HepG2 (cell line): ENCODE measurements at regions of chr7 and their contacts with region 1.

Region 1: GRCh38 chr7:78134256-78134655 is 335.7 kb downstream of the PHTF2 start:
- DNase-seq: peak; percentile 3
- ATAC-seq: peak; percentile 73
- H3K4me3 ChIP-seq: no peak overlapping the region
- H3K27ac ChIP-seq: no peak overlapping the region
- H3K4me1 ChIP-seq: peaks cover 14% of the 10 kb centered on the region
- H3K27me3 ChIP-seq: no peaks in the 10 kb centered on the region; a peak in 1 of 5 replicates
- CTCF ChIP-seq: peak; percentile 43
- EP300 ChIP-seq: no peak
- POLR2A ChIP-seq: no peak
- RAD21 ChIP-seq: no peak

Region 2: GRCh38 chr7:78434281-78434680 is 300.0 kb after region 1 on chr7:
- CTCF ChIA-PET with region 1: no interaction called
- POLR2A ChIA-PET with region 1: no interaction called
- in situ Hi-C with region 1: no loop called
- intact Hi-C with region 1: loop called (anchors 2 kb)
- DNase-seq: no peak
- ATAC-seq: peak; percentile 40; the same call in 1 of the 3 replicates
- H3K4me3 ChIP-seq: no peak overlapping the region
- H3K27ac ChIP-seq: no peak overlapping the region
- H3K4me1 ChIP-seq: peaks cover 8% of the 10 kb centered on the region; the same call in 1 of the 2 replicates
- H3K27me3 ChIP-seq: no peaks in the 10 kb centered on the region
- CTCF ChIP-seq: peak; percentile 10; the same call in 1 of the 2 replicates
- EP300 ChIP-seq: no peak
- POLR2A ChIP-seq: no peak
- RAD21 ChIP-seq: no peak

Region 3: DNA sequence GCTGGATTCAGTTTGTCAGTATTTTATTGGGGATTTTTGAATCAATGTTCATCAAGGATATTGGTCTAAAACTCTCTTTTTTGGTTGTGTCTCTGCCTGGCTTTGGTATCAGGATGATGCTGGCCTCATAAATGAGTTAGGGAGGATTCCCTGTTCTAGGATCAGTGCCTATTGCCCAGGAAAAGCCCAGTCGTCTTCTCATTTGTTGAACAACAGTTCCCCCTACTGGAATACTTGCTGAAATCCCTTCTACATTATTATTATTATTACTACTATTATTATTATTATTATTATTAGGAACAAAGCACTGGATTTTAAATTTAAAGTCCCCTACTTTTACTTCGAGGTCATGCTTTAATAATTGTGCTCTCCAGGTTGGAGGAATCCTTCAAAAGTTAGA is 790.3 kb after region 1 on chr7:
- CTCF ChIA-PET with region 1: no interaction called
- POLR2A ChIA-PET with region 1: no interaction called
- in situ Hi-C with region 1: no loop called
- intact Hi-C with region 1: loop called (anchors 10 kb)
- DNase-seq: no peak
- ATAC-seq: no peak
- H3K4me3 ChIP-seq: no peak overlapping the region
- H3K27ac ChIP-seq: no peak overlapping the region
- H3K4me1 ChIP-seq: no peaks in the 10 kb centered on the region
- H3K27me3 ChIP-seq: no peaks in the 10 kb centered on the region
- CTCF ChIP-seq: peak; percentile 27; the same call in 1 of the 2 replicates
- EP300 ChIP-seq: no peak
- POLR2A ChIP-seq: no peak
- RAD21 ChIP-seq: no peak